Upper lobe of right lung (tissue), 1 donor: ENCODE measurements at regions of chr3 and their contacts with region 1.

Region 1: DNA sequence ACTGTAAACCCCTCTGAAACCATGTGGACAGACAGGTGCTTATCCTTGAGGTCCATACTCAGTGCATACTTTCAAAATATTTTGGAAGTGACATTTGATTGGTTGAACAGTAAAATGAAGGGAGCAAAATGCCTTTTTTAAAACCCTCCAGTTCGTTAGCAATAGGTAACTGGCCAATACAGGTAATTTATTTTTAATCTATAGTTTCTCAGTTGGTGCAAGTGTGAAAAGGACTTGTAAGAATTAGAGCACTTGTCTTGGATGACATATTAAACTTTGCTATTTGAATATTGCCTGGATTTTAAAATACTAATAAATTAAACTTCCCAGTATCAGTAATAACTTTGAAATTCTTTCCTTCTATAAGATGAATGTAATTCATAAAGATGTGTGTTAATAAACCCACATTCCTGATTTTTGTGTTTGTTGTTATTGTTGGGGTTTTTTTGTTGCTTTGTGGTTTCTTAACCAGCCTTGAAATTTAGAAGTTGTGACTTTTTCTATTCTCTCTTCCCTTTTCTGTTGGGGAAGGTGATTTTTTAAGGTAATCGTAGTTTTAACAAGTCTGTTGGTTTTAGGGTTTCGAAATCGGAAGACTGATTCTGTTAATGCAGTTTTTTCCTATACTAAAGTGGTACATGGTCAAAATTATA is 90.0 kb downstream of the STT3B start:
- DNase-seq: no peak
- ATAC-seq: no peak
- H3K4me3 ChIP-seq: no peak overlapping the region
- H3K27ac ChIP-seq: no peak overlapping the region
- H3K4me1 ChIP-seq: no peaks in the 10 kb centered on the region
- H3K27me3 ChIP-seq: no peaks in the 10 kb centered on the region
- CTCF ChIP-seq: no peak

Region 2: GRCh38 chr3:31531992-31532586 is 90.7 kb before region 1 on chr3:
- intact Hi-C with region 1: no loop called
- DNase-seq: peak; percentile 100
- ATAC-seq: peak; percentile 95
- H3K4me3 ChIP-seq: peak overlapping the region; percentile 81
- H3K27ac ChIP-seq: peak overlapping the region; percentile 98
- H3K4me1 ChIP-seq: peaks cover 40% of the 10 kb centered on the region
- H3K27me3 ChIP-seq: no peaks in the 10 kb centered on the region
- CTCF ChIP-seq: no peak

Region 3: DNA sequence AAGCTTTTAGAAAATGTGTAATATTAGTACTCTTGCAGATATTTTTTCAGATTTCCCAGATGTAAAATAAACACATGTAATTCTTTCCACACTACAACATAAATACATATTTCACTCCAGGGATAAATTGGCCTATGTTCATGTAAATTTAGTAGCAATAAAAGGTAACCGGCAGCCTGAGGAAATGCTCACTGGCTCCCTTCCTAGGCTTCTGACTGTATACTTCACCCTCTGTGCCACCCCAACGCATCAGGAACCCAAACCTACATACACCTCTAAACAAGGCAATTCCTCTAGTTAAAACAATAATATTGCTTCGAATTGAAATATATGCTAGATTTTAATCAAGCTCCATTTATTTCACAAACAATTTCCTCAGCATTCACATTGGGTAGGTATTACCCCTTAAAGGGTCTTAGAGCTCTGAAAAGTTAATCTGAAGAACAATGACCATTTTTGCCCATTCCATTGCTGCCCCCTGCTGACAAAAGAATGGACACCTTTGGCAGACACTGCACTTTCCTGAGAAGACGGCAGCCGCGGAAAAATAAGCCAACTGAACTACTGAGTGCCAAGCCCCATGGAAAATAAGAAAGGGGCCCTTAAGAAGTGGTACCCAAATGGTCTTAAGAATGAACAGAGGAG is 145.8 kb after region 1 on chr3:
- intact Hi-C with region 1: loop called (anchors 10 kb)
- DNase-seq: no peak
- ATAC-seq: peak; percentile 83
- H3K4me3 ChIP-seq: no peak overlapping the region
- H3K27ac ChIP-seq: no peak overlapping the region
- H3K4me1 ChIP-seq: peaks cover 3% of the 10 kb centered on the region
- H3K27me3 ChIP-seq: no peaks in the 10 kb centered on the region
- CTCF ChIP-seq: peak; percentile 72